ENCODE measurements at regions of chr18 and their contacts with region 1.

Region 1: DNA sequence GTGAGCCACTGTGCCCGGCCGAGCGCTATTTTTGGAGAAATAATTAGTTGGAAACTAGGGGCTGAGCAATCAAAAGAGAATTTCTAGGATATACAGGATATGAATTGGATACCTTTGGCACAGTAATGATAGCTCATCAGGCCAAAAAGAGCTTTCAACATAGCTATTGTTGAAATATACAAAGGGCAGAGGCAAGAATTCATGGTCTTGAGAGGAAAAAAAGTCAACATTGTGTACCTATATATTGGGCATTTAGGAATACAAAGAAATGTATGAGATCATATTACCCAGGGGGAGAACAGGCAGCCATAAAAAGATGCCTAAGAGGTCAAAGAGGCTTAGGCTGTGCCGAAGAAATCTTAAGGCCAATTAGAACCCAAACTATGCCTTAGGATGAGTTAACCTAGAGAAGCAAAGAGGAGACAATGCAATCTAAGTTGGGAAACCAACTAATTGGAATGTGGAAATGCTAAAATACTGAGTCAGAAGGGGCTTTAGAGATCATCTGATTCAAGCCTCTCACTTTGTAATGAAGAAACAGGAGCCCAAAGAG is 99.0 kb downstream of the RBBP8 start:
- DNase-seq: no peak
- ATAC-seq: no peak
- H3K4me3 ChIP-seq: no peak overlapping the region
- H3K27ac ChIP-seq: no peak overlapping the region
- H3K4me1 ChIP-seq: no peaks in the 10 kb centered on the region
- H3K27me3 ChIP-seq: no peaks in the 10 kb centered on the region

Region 2: DNA sequence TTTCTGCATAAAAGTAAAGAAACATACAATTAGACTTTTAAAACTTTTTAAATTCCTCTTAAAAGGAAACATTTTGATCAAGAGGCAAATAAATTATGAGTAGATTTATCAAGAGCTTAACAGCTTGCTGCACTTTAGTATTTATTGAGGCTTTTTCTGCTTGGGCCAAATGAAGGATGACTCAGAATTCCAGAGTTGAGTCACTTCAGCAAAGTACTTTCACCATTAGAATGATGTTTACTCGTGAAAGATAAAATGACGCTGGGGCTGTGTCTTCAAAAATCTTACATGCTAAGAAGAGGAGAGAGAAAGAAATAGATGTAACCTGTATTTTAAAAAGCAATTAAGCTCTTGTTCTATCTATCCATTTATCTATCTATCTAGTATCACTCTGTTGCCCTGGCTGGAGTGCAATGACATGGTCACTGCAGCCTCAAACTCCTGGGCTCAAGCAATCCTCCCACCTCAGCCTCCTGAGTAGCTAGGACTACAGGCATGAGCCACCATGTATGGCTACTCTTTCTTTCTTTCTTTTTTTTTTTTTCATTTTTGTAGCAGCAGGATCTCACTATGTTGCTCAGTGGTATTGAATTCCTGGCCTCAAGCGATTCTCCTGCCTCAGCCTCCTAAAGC is 345.7 kb after region 1 on chr18:
- intact Hi-C with region 1: loop called in 3 of 4 experiments (anchors 10 kb)
- DNase-seq: no peak
- ATAC-seq: peak; percentile 41 to 62
- H3K4me3 ChIP-seq: no peak overlapping the region
- H3K27ac ChIP-seq: peak overlapping the region; percentile 82
- H3K4me1 ChIP-seq: no peaks in the 10 kb centered on the region
- H3K27me3 ChIP-seq: no peaks in the 10 kb centered on the region

Region 3: GRCh38 chr18:23401400-23402347 is 369.6 kb after region 1 on chr18:
- intact Hi-C with region 1: loop called in 1 of 4 experiments (anchors 10 kb)
- DNase-seq: peak in 1 of 3 donors; percentile 44
- ATAC-seq: peak; percentile 72 to 78
- H3K4me3 ChIP-seq: no peak overlapping the region
- H3K27ac ChIP-seq: no peak overlapping the region
- H3K4me1 ChIP-seq: peaks cover 3% of the 10 kb centered on the region
- H3K27me3 ChIP-seq: no peaks in the 10 kb centered on the region

Region 4: GRCh38 chr18:23412351-23412964 is 380.4 kb after region 1 on chr18:
- intact Hi-C with region 1: loop called in 2 of 4 experiments (anchors 2 to 10 kb)
- DNase-seq: no peak
- ATAC-seq: no peak
- H3K4me3 ChIP-seq: no peak overlapping the region
- H3K27ac ChIP-seq: no peak overlapping the region
- H3K4me1 ChIP-seq: peaks cover 1% of the 10 kb centered on the region
- H3K27me3 ChIP-seq: no peaks in the 10 kb centered on the region